A549 (cell line): ENCODE measurements at regions of chr20 and their contacts with region 1.

Region 1: GRCh38 chr20:13771853-13772453 is 12.8 kb downstream of the ESF1 start:
- DNase-seq: peak; percentile 25 to 36
- ATAC-seq: peak in 1 of 2 experiments; percentile 61; a peak in 3 of 6 replicates
- H3K4me3 ChIP-seq: no peak overlapping the region
- H3K27ac ChIP-seq: no peak overlapping the region
- H3K4me1 ChIP-seq: no peaks in the 10 kb centered on the region
- CTCF ChIP-seq: peak; percentile 64; the same call in 2 of the 3 replicates
- EP300 ChIP-seq: no peak
- POLR2A ChIP-seq: no peak
- RAD21 ChIP-seq: peak; percentile 56 to 65

Region 2: GRCh38 chr20:13384132-13384531 is 387.8 kb before region 1 on chr20:
- CTCF ChIA-PET with region 1: no interaction called
- POLR2A ChIA-PET with region 1: no interaction called
- DNase-seq: no peak
- ATAC-seq: no peak
- H3K4me3 ChIP-seq: no peak overlapping the region
- H3K27ac ChIP-seq: no peak overlapping the region
- H3K4me1 ChIP-seq: no peaks in the 10 kb centered on the region
- CTCF ChIP-seq: no peak
- EP300 ChIP-seq: no peak
- POLR2A ChIP-seq: no peak
- RAD21 ChIP-seq: no peak

Region 3: GRCh38 chr20:13753436-13754036 is 18.4 kb before region 1 on chr20:
- CTCF ChIA-PET with region 1: interaction called, 21 read pairs
- POLR2A ChIA-PET with region 1: no interaction called
- DNase-seq: no peak
- ATAC-seq: no peak
- H3K4me3 ChIP-seq: no peak overlapping the region
- H3K27ac ChIP-seq: no peak overlapping the region
- H3K4me1 ChIP-seq: no peaks in the 10 kb centered on the region
- CTCF ChIP-seq: no peak
- EP300 ChIP-seq: no peak
- POLR2A ChIP-seq: no peak
- RAD21 ChIP-seq: no peak

Region 4: GRCh38 chr20:13784893-13785715 is 13.2 kb after region 1 on chr20 and contains the starts of genes ESF1 and NDUFAF5:
- CTCF ChIA-PET with region 1: interaction called, 25 read pairs
- POLR2A ChIA-PET with region 1: interaction called, 5 read pairs
- DNase-seq: peak; percentile 97 to 99
- ATAC-seq: peak; percentile 95 to 98
- H3K4me3 ChIP-seq: peak within 1 kb of the TSS; percentile 93
- H3K27ac ChIP-seq: peak within 1 kb of the TSS; percentile 86 to 94
- H3K4me1 ChIP-seq: peaks cover 29% of the 10 kb centered on the region
- CTCF ChIP-seq: no peak
- EP300 ChIP-seq: no peak
- POLR2A ChIP-seq: peak; percentile 94
- RAD21 ChIP-seq: no peak
- polyA plus RNA-seq, gene ESF1: 12.2 and 30.5 TPM in 2 replicates
- polyA plus RNA-seq, gene NDUFAF5: 36.6 and 53.5 TPM in 2 replicates